ENCODE measurements at regions of chr16 and their contacts with region 1.

Region 1: GRCh38 chr16:361872-362701 is 8.3 kb downstream of the MRPL28 start:
- DNase-seq: peak; percentile 44
- H3K4me3 ChIP-seq: no peak overlapping the region
- CTCF ChIP-seq: peak; percentile 74

Region 2: GRCh38 chr16:324451-325334 is 37.4 kb before region 1 on chr16:
- in situ Hi-C with region 1: loop called (anchors 5 kb)
- DNase-seq: no peak
- H3K4me3 ChIP-seq: no peak overlapping the region
- CTCF ChIP-seq: no peak

Measured in astrocyte of the cerebellum (primary cell).